Endothelial cell of umbilical vein (primary cell): ENCODE measurements at regions of chr6 and their contacts with region 1.

Region 1: GRCh38 chr6:35583893-35584688 is 71.4 kb upstream of the TULP1 start:
- DNase-seq: peak; percentile 82
- H3K4me3 ChIP-seq: no peak overlapping the region
- H3K27ac ChIP-seq: no peak overlapping the region
- H3K4me1 ChIP-seq: no peaks in the 10 kb centered on the region
- H3K27me3 ChIP-seq: no peaks in the 10 kb centered on the region
- CTCF ChIP-seq: peak; percentile 69 to 78
- POLR2A ChIP-seq: no peak

Region 2: GRCh38 chr6:35503534-35503933 is 80.6 kb before region 1 on chr6:
- CTCF ChIA-PET with region 1: no interaction called
- POLR2A ChIA-PET with region 1: no interaction called
- dilution Hi-C with region 1: no loop called
- intact Hi-C with region 1: no loop called
- DNase-seq: no peak
- H3K4me3 ChIP-seq: no peak overlapping the region
- H3K27ac ChIP-seq: no peak overlapping the region
- H3K4me1 ChIP-seq: no peaks in the 10 kb centered on the region
- H3K27me3 ChIP-seq: peaks cover 9 to 33% of the 10 kb centered on the region in 2 experiments
- CTCF ChIP-seq: no peak
- POLR2A ChIP-seq: no peak

Region 3: GRCh38 chr6:35522660-35523658 is 61.1 kb before region 1 on chr6:
- CTCF ChIA-PET with region 1: interaction called, 16 read pairs
- POLR2A ChIA-PET with region 1: no interaction called
- dilution Hi-C with region 1: no loop called
- intact Hi-C with region 1: no loop called
- DNase-seq: peak; percentile 72
- H3K4me3 ChIP-seq: peak overlapping the region in 2 of 3 experiments; percentile 33 to 46
- H3K27ac ChIP-seq: no peak overlapping the region
- H3K4me1 ChIP-seq: no peaks in the 10 kb centered on the region
- H3K27me3 ChIP-seq: no peaks in the 10 kb centered on the region
- CTCF ChIP-seq: peak; percentile 80 to 93
- POLR2A ChIP-seq: no peak

Region 4: DNA sequence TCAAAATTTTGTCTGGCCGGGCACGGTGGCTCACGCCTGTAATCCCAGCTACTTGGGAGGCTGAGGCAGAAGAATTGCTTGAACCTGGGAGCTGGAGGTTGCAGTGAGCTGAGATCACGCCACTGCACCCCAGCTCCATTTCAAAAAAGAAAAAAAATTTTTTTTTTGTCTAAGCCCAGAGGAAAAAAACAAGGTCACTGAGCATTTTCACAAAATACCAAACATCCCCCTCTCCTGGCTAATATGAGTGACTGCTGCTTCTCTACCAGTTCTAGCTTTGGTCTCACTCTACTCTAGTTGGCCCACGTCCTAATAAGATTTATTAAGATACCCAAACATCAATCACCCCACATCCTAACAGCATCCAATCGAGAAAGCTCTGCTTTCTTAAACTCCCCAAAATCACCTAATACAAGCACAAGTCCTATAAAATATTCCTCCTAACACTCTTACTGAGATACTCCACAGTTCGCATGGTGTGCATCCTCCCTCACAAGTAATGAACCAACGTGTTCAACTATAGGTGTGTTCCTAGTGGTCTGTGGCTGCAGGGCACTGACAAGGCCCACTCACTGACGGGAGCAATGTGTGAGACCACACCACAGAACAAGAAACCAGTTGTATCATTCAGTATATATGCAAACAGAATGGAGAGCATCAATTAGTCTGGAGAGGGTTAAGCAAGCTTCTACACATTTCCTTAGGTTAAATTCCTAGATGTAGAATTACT is 40.4 kb after region 1 on chr6:
- CTCF ChIA-PET with region 1: interaction called, 56 read pairs
- POLR2A ChIA-PET with region 1: no interaction called
- dilution Hi-C with region 1: no loop called
- intact Hi-C with region 1: loop called (anchors 1 kb)
- DNase-seq: peak; percentile 42
- H3K4me3 ChIP-seq: no peak overlapping the region
- H3K27ac ChIP-seq: no peak overlapping the region
- H3K4me1 ChIP-seq: no peaks in the 10 kb centered on the region
- H3K27me3 ChIP-seq: no peaks in the 10 kb centered on the region
- CTCF ChIP-seq: peak; percentile 23 to 41
- POLR2A ChIP-seq: no peak

Region 5: DNA sequence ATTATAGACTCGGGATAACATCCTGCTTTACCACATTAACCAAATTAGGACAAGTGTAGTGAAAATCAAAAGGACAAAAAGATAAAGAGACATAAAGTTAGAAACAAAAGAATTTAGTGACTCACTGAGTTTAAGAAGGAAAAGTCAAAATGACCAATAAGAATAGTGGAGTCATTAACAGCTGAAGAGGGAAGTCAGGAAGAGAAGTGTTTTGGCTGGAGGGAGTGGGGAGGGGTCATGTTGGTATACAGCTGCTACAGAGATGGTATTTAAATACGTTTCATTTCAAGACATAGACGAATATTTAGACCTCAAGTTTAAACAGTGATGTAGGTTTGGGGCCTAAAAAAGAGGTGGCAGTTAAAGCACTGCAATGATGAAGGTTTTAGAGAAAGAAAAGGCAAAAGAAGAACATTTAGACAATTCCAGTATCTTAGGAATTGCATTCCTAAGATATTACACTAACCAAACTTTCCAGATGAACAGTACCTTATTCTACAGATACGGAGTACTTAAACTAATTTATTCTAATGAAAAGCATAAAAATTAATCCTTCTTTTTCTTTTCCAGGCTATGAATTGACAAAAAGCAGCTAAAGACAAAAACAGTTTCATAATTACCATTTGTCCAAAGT is 94.0 kb after region 1 on chr6:
- CTCF ChIA-PET with region 1: interaction called, 29 read pairs
- POLR2A ChIA-PET with region 1: no interaction called
- dilution Hi-C with region 1: no loop called
- intact Hi-C with region 1: no loop called
- DNase-seq: peak; percentile 79
- H3K4me3 ChIP-seq: peak overlapping the region in 1 of 3 experiments; percentile 15
- H3K27ac ChIP-seq: peak overlapping the region; percentile 84
- H3K4me1 ChIP-seq: peaks cover 19% of the 10 kb centered on the region
- H3K27me3 ChIP-seq: no peaks in the 10 kb centered on the region
- CTCF ChIP-seq: no peak
- POLR2A ChIP-seq: no peak

Region 6: DNA sequence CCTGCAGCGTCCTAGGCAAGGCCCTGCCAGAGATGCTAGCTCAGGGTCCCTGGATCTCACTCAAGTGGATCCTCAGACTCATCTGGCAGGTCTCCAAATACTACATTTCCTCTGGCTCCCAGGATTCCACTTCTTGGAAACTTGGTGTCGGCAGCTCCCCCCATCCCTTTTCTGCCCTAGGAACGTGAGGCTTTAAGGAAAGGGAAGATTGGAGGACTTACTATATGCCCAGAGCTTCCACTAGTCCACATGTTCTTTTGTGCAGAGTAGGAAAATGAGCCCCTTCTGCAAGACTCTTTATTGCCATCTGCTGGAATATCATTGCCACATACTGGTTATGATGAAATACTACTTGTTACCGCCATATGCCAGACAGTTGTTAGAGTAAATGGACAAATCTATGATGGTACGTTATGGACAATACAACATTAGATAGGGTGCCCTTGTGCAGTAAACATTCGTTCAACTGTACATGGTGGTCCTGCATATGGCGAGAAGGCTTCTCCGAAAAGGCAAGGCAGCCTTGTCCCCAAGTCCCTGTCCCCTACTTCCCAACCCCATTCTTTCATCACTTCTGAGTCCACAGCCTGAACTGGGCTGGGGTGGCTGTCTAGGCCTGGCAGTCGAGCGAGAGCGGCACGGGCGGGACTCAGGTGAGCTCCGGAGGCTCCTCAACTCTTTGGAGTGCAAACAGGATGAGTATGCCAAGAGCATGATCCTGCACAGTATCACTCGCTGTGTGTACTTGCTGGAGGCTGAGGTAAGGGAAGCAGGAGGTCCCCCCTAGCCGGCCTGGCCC is 153.5 kb after region 1 on chr6:
- CTCF ChIA-PET with region 1: interaction called, 89 read pairs
- POLR2A ChIA-PET with region 1: no interaction called
- dilution Hi-C with region 1: no loop called
- intact Hi-C with region 1: loop called (anchors 1 kb)
- DNase-seq: peak; percentile 77
- H3K4me3 ChIP-seq: no peak overlapping the region
- H3K27ac ChIP-seq: no peak overlapping the region
- H3K4me1 ChIP-seq: peaks cover 8% of the 10 kb centered on the region
- H3K27me3 ChIP-seq: no peaks in the 10 kb centered on the region
- CTCF ChIP-seq: peak; percentile 60 to 67
- POLR2A ChIP-seq: no peak

Region 7: DNA sequence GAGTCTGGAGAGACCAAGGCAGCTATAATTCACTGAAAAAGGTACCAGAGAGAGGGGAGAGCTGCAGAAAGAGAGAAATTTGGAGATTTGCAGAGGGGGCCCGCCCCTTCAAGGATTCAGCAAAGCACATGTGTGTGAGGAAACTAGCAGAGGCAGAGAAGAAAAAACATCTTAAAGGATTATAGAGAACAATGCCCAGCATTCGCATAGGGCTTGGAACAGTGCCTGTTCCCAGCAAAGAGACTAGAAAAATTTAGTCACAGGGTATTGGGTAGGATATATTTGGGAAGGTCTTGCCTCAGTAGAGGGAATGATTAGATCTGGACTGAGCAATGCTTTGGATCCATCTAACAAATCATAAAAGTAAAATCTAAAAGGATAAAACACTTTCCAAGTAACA is 292.8 kb after region 1 on chr6:
- CTCF ChIA-PET with region 1: no interaction called
- POLR2A ChIA-PET with region 1: no interaction called
- dilution Hi-C with region 1: no loop called
- intact Hi-C with region 1: no loop called
- DNase-seq: peak; percentile 4
- H3K4me3 ChIP-seq: no peak overlapping the region
- H3K27ac ChIP-seq: no peak overlapping the region
- H3K4me1 ChIP-seq: no peaks in the 10 kb centered on the region
- H3K27me3 ChIP-seq: no peaks in the 10 kb centered on the region
- CTCF ChIP-seq: no peak
- POLR2A ChIP-seq: no peak

Region 8: DNA sequence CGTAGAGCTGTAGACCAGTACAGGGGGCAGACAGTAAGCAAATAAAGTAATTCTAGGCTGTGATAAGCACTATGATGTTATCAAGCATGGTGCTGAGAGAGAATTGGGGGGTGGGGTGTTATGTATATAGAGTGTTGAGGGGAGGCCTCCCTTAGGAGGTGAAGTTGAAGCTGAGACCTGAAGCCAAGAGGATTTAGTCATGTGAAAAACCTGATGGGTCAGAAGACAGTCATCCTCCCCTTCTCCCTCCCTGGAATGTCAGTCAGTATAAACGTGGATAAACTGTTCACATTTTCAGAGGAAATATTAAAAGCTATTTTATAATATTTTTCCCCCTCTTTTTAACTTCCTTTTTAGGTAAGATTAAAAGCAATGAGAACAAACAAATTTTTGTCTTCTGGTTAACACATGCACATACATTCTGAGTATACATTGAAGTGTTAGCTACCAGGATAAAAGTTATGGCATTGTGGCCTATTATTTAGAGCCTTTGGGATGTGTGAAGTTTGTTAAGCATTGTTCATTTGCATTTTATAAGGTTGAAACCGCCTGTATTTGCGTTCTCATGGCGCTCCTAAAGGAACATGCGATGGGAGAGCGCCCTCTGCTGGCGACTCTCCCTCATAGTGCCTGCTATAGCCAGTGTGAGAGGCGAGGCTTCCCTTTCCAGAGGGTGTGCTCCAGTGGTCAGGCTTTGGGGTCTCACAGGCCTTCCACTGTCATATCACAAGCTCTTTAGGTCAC is 510.8 kb after region 1 on chr6:
- CTCF ChIA-PET with region 1: no interaction called
- POLR2A ChIA-PET with region 1: no interaction called
- dilution Hi-C with region 1: no loop called
- intact Hi-C with region 1: loop called (anchors 10 kb)
- DNase-seq: peak; percentile 83
- H3K4me3 ChIP-seq: no peak overlapping the region
- H3K27ac ChIP-seq: no peak overlapping the region
- H3K4me1 ChIP-seq: peaks cover 8% of the 10 kb centered on the region
- H3K27me3 ChIP-seq: no peaks in the 10 kb centered on the region
- CTCF ChIP-seq: peak; percentile 93 to 94
- POLR2A ChIP-seq: no peak

Region 9: DNA sequence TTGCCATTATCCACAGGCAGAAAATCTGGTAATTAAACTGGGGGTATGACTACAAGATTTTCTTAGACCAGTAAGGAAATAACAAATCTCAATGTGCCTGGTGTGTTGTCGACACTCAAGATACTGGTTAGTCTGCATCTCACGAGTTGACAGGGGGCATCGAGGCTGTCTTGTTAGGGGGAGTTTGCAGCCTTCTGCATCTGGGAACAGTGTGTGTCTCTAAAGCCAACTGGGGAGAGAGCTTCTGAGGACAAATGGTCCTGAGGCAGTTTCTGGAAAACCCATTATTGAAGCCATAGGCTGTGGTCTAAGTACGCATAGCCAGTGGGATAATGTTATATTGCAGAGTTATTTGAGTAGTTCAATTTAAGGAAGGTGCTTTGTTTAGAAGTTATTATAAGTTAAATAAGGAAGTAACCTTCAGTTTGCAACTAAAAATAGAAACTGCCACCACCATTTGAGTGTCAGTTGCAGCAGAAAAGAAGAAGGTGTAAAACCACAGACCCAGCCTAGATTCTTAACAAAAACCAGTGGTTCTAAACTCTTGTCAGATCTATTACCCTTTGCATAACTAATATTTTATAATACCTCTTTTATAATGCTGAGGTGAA is 530.8 kb after region 1 on chr6:
- CTCF ChIA-PET with region 1: no interaction called
- POLR2A ChIA-PET with region 1: no interaction called
- dilution Hi-C with region 1: no loop called
- intact Hi-C with region 1: no loop called
- DNase-seq: no peak
- H3K4me3 ChIP-seq: no peak overlapping the region
- H3K27ac ChIP-seq: no peak overlapping the region
- H3K4me1 ChIP-seq: no peaks in the 10 kb centered on the region
- H3K27me3 ChIP-seq: no peaks in the 10 kb centered on the region
- CTCF ChIP-seq: no peak
- POLR2A ChIP-seq: no peak

Region 10: DNA sequence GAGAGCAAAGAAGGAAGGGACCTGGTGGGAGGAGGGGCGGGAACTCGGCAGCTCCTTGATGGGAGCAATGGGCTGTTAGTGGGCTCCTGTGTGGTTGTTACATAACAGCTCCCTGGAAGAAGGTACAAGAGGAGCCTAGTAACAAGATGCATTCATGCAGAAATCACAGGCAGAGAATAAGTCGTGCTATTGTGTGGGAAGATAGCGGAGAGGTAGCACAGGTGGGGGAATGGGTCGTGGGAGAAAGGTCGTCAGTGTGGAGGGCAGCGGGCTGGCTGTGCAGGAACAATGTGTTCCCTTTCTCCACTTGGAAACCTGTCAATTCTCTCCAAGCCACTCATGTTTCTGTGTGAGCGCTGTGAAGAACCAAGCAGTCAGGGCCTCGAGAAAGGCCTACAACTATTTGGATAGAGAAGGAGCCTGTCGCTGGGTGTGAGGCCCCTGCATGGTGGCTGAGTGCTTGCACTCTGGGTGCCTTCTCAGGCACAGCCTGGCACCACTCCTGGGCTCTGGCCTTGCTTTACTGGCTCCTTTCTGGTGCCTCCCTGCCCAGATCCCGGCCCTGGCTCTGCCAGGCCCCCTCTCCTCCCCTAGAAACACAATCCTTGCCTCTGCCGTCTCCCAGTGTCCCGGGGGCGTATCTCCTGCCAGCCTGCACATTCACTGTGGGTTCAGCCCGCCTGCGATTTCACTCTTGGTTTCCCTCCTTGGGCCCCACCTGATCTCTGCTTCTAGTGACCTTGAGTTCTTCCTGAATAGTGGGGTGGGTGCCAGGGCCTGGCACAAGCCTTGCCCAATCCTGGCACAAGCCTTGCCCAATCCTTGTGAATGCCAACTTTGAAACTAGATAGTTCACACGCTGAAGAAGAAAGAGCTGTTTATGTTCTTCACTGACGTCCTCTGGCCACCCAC is 1414.0 kb after region 1 on chr6:
- CTCF ChIA-PET with region 1: no interaction called
- POLR2A ChIA-PET with region 1: no interaction called
- dilution Hi-C with region 1: no loop called
- intact Hi-C with region 1: no loop called
- DNase-seq: no peak
- H3K4me3 ChIP-seq: no peak overlapping the region
- H3K27ac ChIP-seq: no peak overlapping the region
- H3K4me1 ChIP-seq: no peaks in the 10 kb centered on the region
- H3K27me3 ChIP-seq: peaks cover 0 to 11% of the 10 kb centered on the region in 2 experiments
- CTCF ChIP-seq: no peak
- POLR2A ChIP-seq: no peak